ENCODE measurements at regions of chr2 and their contacts with region 1.

Region 1: GRCh38 chr2:191691016-191691735 is 13.2 kb downstream of the NABP1 start:
- DNase-seq: peak; percentile 27 to 39
- H3K4me3 ChIP-seq: no peak overlapping the region
- H3K27ac ChIP-seq: no peak overlapping the region
- H3K4me1 ChIP-seq: peaks cover 0 to 9% of the 10 kb centered on the region in 2 donors
- H3K27me3 ChIP-seq: no peaks in the 10 kb centered on the region
- CTCF ChIP-seq: peak; percentile 31 to 82 (median 70)
- POLR2A ChIP-seq: no peak

Region 2: DNA sequence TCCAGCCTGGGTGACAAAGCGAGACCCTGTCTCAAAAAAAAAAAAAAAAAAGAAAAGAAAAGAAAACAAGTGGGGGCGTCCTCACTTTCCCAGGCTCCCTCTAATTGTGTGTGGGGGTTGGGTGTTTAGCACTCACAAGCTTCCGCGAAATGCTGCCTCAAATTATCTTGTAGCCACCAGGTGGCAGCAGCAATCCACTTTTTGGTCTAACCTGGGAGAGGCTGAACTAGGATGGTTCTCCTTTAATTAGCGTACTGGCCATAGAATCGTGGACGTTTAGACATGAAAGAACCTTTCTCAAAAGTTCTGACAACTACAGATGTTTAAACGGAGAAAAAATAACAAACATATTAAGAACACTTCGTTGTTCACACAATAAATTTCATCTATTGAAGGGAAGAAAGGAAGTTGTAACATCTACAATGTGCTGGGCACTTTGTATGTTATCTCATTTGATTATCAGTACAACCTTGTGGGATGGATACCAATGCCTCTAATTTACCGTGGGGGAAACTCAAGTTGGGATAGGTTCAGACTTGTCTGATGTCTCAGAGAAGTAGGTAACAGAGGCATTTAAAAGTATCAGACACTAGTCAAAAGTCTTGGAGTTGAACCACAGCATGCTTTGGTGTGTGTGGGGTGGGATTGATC is 136.0 kb before region 1 on chr2:
- intact Hi-C with region 1: loop called (anchors 5 kb)
- DNase-seq: peak; percentile 78 to 85
- H3K4me3 ChIP-seq: no peak overlapping the region
- H3K27ac ChIP-seq: no peak overlapping the region
- H3K4me1 ChIP-seq: no peaks in the 10 kb centered on the region
- H3K27me3 ChIP-seq: no peaks in the 10 kb centered on the region
- CTCF ChIP-seq: peak in 5 of 6 experiments; percentile 35 to 76 (median 72)
- POLR2A ChIP-seq: no peak

Region 3: DNA sequence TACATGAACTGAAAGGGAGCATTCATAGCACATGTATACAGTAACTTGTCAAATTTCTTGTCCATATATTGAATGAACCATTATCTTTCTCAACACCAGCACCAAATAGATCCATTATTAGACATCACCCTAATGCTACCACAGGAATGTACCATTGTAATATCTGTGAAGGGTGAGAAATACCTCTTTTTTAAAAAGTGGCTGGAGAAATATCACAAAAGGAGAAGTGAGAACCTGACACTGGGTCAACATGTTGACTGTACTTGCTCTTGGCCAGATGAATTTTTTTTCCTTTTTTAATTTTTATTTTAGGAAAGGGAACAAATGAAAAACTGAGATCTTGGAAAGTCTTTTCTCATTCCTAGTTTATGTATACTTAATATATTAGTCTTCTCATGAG is 92.2 kb after region 1 on chr2:
- intact Hi-C with region 1: no loop called
- DNase-seq: no peak
- H3K4me3 ChIP-seq: no peak overlapping the region
- H3K27ac ChIP-seq: no peak overlapping the region
- H3K4me1 ChIP-seq: no peaks in the 10 kb centered on the region
- H3K27me3 ChIP-seq: no peaks in the 10 kb centered on the region
- CTCF ChIP-seq: no peak
- POLR2A ChIP-seq: no peak

Region 4: GRCh38 chr2:192087398-192087958 is 396.3 kb after region 1 on chr2:
- intact Hi-C with region 1: no loop called
- DNase-seq: no peak
- H3K4me3 ChIP-seq: no peak overlapping the region
- H3K27ac ChIP-seq: no peak overlapping the region
- H3K4me1 ChIP-seq: peaks cover 0 to 4% of the 10 kb centered on the region in 2 donors
- H3K27me3 ChIP-seq: no peaks in the 10 kb centered on the region
- CTCF ChIP-seq: no peak
- POLR2A ChIP-seq: no peak

Measured in thyroid gland (tissue), 4 donors.